Ovary (tissue), 10 donors: ENCODE measurements at regions of chr12 and their contacts with region 1.

Region 1: GRCh38 chr12:122860346-122861090 is 25.3 kb downstream of the HIP1R start:
- DNase-seq: peak; percentile 85 to 94 (median 92)
- H3K4me3 ChIP-seq: no peak overlapping the region
- H3K27ac ChIP-seq: peak overlapping the region; percentile 29 to 34
- H3K4me1 ChIP-seq: peaks cover 2% of the 10 kb centered on the region
- H3K27me3 ChIP-seq: no peaks in the 10 kb centered on the region
- CTCF ChIP-seq: peak; percentile 78 to 96 (median 94)
- EP300 ChIP-seq: no peak
- POLR2A ChIP-seq: no peak

Region 2: DNA sequence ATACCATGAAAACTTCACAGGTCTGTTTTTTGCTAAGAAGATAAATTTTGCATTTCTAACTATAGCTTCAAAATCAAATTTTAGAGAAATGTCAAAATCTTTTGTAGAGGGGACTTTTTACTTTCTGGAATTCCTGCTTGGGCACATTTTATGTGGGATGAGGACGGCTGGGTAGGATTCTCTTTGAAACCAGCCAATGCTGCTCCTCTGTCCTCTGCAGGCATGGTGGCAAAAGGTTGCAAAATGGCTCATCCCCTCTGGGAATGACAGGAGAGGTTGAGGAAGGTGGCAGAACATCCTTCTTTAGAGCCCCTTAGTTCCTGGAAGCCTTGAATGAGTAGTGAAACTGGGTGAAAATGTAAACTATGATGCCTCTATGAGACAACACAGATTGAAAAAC is 92.8 kb before region 1 on chr12:
- intact Hi-C with region 1: no loop called
- DNase-seq: no peak
- H3K4me3 ChIP-seq: no peak overlapping the region
- H3K27ac ChIP-seq: no peak overlapping the region
- H3K4me1 ChIP-seq: no peaks in the 10 kb centered on the region
- H3K27me3 ChIP-seq: no peaks in the 10 kb centered on the region
- CTCF ChIP-seq: no peak
- EP300 ChIP-seq: no peak
- POLR2A ChIP-seq: no peak

Region 3: DNA sequence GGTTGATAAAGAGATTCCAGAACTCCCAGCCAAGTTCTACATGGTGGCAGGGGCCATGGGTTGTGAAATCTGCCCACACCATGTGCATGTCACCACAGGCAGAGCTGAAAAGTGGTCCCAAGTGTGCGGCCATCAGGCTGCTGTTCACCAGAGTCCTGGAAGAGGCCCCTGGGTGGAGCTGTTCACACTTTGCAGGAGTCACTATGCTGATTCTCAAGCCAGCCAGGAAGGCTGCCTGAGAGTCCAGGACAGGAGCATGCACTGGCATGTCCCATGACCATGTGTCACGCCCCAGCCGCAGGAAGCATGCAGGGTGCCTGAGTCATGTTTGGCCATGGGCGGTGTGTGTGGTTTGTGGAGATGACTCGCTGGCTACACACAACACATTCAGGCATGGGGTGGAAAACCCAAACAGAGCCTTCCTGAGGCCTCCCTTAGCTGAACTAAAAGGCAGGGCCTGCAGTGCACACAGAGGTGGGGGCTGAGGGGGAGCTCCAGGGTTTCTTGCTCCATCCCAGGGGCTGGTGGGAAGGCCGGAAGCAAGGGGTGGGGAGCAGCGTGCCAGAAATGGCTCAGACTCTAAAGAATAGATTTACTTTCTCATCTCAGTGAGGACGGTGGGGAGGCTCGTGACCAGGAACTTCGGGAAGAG is 86.3 kb after region 1 on chr12:
- intact Hi-C with region 1: loop called (anchors 2 to 5 kb)
- DNase-seq: peak in 3 of 5 donors; percentile 51 to 54 (median 52)
- H3K4me3 ChIP-seq: no peak overlapping the region
- H3K27ac ChIP-seq: no peak overlapping the region
- H3K4me1 ChIP-seq: no peaks in the 10 kb centered on the region
- H3K27me3 ChIP-seq: no peaks in the 10 kb centered on the region
- CTCF ChIP-seq: no peak
- EP300 ChIP-seq: no peak
- POLR2A ChIP-seq: no peak

Region 4: GRCh38 chr12:122951979-122952892 is 91.7 kb after region 1 on chr12:
- intact Hi-C with region 1: loop called (anchors 2 to 5 kb)
- DNase-seq: peak; percentile 52 to 77 (median 67)
- H3K4me3 ChIP-seq: no peak overlapping the region
- H3K27ac ChIP-seq: no peak overlapping the region
- H3K4me1 ChIP-seq: no peaks in the 10 kb centered on the region
- H3K27me3 ChIP-seq: no peaks in the 10 kb centered on the region
- CTCF ChIP-seq: peak; percentile 55 to 63 (median 58)
- EP300 ChIP-seq: no peak
- POLR2A ChIP-seq: no peak

Region 5: GRCh38 chr12:123242116-123242904 is 381.8 kb after region 1 on chr12:
- intact Hi-C with region 1: loop called (anchors 5 to 10 kb)
- DNase-seq: no peak
- H3K4me3 ChIP-seq: no peak overlapping the region
- H3K27ac ChIP-seq: no peak overlapping the region
- H3K4me1 ChIP-seq: no peaks in the 10 kb centered on the region
- H3K27me3 ChIP-seq: no peaks in the 10 kb centered on the region
- CTCF ChIP-seq: no peak
- EP300 ChIP-seq: no peak
- POLR2A ChIP-seq: no peak